Naive thymus-derived CD4-positive, alpha-beta T cell (primary cell): ENCODE measurements at regions of chr20 and their contacts with region 1.

Region 1: GRCh38 chr20:44310664-44311639 is at the start of gene FITM2:
- DNase-seq: peak; percentile 96 to 99 (median 98)
- ATAC-seq: peak; percentile 99
- H3K4me3 ChIP-seq: peak within 1 kb of the TSS; percentile 98
- H3K4me3 Mint-ChIP-seq: peak within 1 kb of the TSS; percentile 87 to 97 (median 95)
- H3K27ac ChIP-seq: peak within 1 kb of the TSS; percentile 82
- H3K27ac Mint-ChIP-seq: peak within 1 kb of the TSS; percentile 91 to 98 (median 93)
- H3K4me1 ChIP-seq: peaks cover 12 to 18% of the 10 kb centered on the region in 2 donors
- H3K4me1 Mint-ChIP-seq: peaks cover 15 to 35% (median 28%) of the 10 kb centered on the region in 7 donors
- H3K27me3 ChIP-seq: no peaks in the 10 kb centered on the region
- H3K27me3 Mint-ChIP-seq: peaks cover 0 to 8% (median 0%) of the 10 kb centered on the region in 5 donors
- total RNA-seq, gene FITM2: 3.1 to 7.9 (median 5.0) TPM

Region 2: GRCh38 chr20:43590392-43591323 is 720.3 kb before region 1 on chr20 and contains the start of gene IFT52:
- CTCF ChIA-PET with region 1: no interaction called
- POLR2A ChIA-PET with region 1: no interaction called
- intact Hi-C with region 1: loop called in 1 of 2 experiments (anchors 2 kb)
- DNase-seq: peak; percentile 76 to 89 (median 87)
- ATAC-seq: peak; percentile 98
- H3K4me3 ChIP-seq: peak within 1 kb of the TSS; percentile 90
- H3K4me3 Mint-ChIP-seq: peak within 1 kb of the TSS; percentile 90 to 97 (median 94)
- H3K27ac ChIP-seq: peak within 1 kb of the TSS; percentile 88
- H3K27ac Mint-ChIP-seq: peak within 1 kb of the TSS; percentile 91 to 98 (median 97)
- H3K4me1 ChIP-seq: peaks cover 5 to 10% of the 10 kb centered on the region in 2 donors
- H3K4me1 Mint-ChIP-seq: peaks cover 17 to 21% (median 21%) of the 10 kb centered on the region in 7 donors
- H3K27me3 ChIP-seq: no peaks in the 10 kb centered on the region
- H3K27me3 Mint-ChIP-seq: peaks cover 0 to 5% (median 0%) of the 10 kb centered on the region in 5 donors
- total RNA-seq, gene IFT52: 14.8 to 19.7 (median 16.9) TPM

Region 3: DNA sequence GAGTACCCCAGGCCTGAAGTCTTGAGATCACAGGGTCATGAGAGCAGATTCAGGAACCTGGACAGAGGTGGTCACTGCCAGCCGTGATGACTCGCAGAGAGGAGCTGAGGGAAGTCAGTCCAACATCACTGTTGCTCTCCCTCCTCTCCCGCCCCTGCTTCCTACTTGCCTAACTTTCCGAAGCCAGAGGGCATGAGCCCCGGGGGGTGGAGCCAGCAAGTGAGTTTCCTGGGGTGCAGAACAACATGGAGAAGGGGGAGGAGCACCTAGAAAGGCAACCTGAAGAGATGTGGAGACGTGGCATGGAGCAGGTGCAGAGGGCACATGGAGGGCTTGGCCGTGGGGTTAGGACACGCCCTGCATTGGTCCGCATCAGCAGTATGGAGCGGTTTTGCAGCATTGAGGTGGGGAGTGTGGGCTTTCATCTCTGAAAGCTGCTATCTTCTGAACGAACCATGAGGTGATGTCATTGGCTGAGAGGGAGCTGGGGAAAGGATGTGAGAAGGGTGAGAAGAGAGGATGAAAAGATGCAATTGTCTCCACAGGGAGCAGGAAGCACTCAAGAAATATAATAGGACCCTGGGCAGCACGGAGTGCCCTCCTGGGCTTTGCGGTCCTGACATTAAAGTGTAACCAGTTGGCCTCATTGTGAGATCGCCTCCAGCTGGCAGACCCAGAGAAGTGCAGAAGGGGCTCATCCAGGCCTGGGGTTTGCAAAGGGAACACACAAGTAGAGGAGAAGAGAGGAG is 38.9 kb before region 1 on chr20:
- CTCF ChIA-PET with region 1: no interaction called
- POLR2A ChIA-PET with region 1: no interaction called
- intact Hi-C with region 1: loop called in 1 of 2 experiments (anchors 1 kb)
- DNase-seq: peak in 3 of 9 donors; percentile 7 to 41 (median 8)
- ATAC-seq: peak; percentile 48
- H3K4me3 ChIP-seq: no peak overlapping the region
- H3K4me3 Mint-ChIP-seq: no peak overlapping the region
- H3K27ac ChIP-seq: no peak overlapping the region
- H3K27ac Mint-ChIP-seq: no peak overlapping the region
- H3K4me1 ChIP-seq: no peaks in the 10 kb centered on the region
- H3K4me1 Mint-ChIP-seq: peaks cover 0 to 2% (median 0%) of the 10 kb centered on the region in 7 donors
- H3K27me3 ChIP-seq: no peaks in the 10 kb centered on the region
- H3K27me3 Mint-ChIP-seq: no peaks in the 10 kb centered on the region

Region 4: GRCh38 chr20:44460795-44461141 is 149.8 kb after region 1 on chr20:
- CTCF ChIA-PET with region 1: interaction called, 3 read pairs
- POLR2A ChIA-PET with region 1: no interaction called
- intact Hi-C with region 1: loop called in 1 of 2 experiments (anchors 5 kb)
- DNase-seq: peak in 5 of 9 donors; percentile 16 to 31 (median 24)
- ATAC-seq: peak; percentile 34
- H3K4me3 ChIP-seq: no peak overlapping the region
- H3K4me3 Mint-ChIP-seq: no peak overlapping the region
- H3K27ac ChIP-seq: no peak overlapping the region
- H3K27ac Mint-ChIP-seq: peak overlapping the region in 1 of 9 donors; percentile 43
- H3K4me1 ChIP-seq: no peaks in the 10 kb centered on the region
- H3K4me1 Mint-ChIP-seq: no peaks in the 10 kb centered on the region
- H3K27me3 ChIP-seq: no peaks in the 10 kb centered on the region
- H3K27me3 Mint-ChIP-seq: peaks cover 0 to 5% (median 0%) of the 10 kb centered on the region in 5 donors

Region 5: GRCh38 chr20:44733341-44734069 is 422.6 kb after region 1 on chr20:
- CTCF ChIA-PET with region 1: no interaction called
- POLR2A ChIA-PET with region 1: no interaction called
- intact Hi-C with region 1: loop called in 1 of 2 experiments (anchors 10 kb)
- DNase-seq: peak; percentile 34 to 73 (median 57)
- ATAC-seq: peak; percentile 77
- H3K4me3 ChIP-seq: no peak overlapping the region
- H3K4me3 Mint-ChIP-seq: no peak overlapping the region
- H3K27ac ChIP-seq: no peak overlapping the region
- H3K27ac Mint-ChIP-seq: peak overlapping the region in 1 of 9 donors; percentile 32
- H3K4me1 ChIP-seq: no peaks in the 10 kb centered on the region
- H3K4me1 Mint-ChIP-seq: peaks cover 11 to 23% (median 20%) of the 10 kb centered on the region in 7 donors
- H3K27me3 ChIP-seq: no peaks in the 10 kb centered on the region
- H3K27me3 Mint-ChIP-seq: no peaks in the 10 kb centered on the region